ENCODE measurements at regions of chr10 and their contacts with region 1.

Region 1: GRCh38 chr10:4767033-4767814 is 58.8 kb upstream of the AKR1E2 start:
- DNase-seq: no peak

Region 2: DNA sequence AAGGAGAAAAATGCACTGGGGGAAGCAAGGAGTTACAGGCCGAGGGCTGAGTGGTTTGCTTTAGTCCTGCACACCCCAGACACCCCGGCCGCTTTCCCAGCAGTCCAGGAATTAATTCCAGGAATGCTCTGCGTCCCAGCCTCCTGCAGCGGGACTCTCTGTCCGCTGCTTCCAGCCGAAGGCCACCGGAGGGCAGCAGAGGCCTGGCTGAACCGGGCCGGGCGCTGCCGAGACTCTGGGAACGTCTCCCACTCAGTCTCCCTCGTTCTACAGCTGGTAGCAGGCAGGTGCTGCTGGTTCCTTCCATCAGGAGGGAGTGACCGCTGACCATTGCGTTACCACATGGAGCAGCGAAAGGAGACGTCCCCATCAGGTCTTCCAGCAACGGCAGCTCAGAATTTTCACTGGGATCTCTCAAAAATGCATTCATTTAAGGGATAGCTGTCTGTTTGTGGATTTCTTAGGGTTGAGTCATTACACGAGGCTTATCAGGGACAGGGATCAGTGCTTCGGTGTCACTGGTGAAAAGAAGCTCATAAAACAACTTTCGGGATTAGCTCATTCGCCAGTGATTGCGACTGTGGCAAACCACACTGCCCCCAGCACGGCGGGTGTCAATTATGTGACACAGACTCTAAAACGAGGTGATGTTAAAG is 1569.7 kb before region 1 on chr10:
- intact Hi-C with region 1: loop called (anchors 2 kb)
- DNase-seq: peak; percentile 88

Region 3: DNA sequence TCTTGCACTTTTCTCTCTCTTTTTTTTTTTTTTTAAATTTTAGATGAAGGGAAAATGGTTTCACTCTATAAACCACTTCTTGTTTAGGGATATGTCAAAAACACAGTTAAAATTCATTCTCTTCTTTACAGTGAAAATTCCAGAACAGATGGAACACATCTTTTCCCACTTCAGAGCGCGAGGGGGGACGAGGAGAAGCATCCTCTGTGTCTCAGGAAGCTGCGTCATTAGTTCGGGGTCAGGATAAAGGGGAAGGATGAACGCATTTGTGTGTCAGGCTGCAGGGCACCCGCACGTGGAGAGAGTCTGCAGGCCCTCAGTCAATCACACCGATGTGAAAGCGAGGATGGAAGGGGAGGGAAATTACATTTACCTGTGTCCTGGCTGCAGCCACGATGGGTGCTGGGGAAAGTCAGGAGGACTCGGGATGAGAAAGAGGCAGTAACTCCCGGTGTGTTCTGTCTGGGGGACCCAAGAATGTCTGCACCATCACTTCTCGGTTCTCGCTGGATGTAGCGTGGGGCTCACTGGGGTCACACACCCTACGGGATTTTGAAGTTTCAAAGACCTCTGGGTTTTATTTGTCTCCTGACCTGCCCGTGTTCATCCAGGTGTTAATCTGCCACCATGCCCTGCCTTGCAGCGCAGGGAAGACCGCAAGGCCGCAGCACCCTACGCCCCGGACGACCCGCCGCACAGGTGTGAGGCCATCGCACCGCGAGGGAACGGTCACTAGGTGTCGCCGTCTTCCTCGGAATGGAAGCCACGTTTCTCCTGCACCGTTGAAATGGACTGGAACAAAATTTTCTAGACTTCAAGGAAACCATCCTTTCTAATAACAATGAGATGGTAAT is 1527.9 kb before region 1 on chr10:
- intact Hi-C with region 1: loop called (anchors 5 kb)
- DNase-seq: peak; percentile 91

Region 4: GRCh38 chr10:4241724-4242345 is 525.4 kb before region 1 on chr10:
- intact Hi-C with region 1: loop called (anchors 5 kb)
- DNase-seq: no peak

Region 5: GRCh38 chr10:4344511-4344994 is 422.7 kb before region 1 on chr10:
- intact Hi-C with region 1: loop called (anchors 10 kb)
- DNase-seq: peak; percentile 80

Region 6: DNA sequence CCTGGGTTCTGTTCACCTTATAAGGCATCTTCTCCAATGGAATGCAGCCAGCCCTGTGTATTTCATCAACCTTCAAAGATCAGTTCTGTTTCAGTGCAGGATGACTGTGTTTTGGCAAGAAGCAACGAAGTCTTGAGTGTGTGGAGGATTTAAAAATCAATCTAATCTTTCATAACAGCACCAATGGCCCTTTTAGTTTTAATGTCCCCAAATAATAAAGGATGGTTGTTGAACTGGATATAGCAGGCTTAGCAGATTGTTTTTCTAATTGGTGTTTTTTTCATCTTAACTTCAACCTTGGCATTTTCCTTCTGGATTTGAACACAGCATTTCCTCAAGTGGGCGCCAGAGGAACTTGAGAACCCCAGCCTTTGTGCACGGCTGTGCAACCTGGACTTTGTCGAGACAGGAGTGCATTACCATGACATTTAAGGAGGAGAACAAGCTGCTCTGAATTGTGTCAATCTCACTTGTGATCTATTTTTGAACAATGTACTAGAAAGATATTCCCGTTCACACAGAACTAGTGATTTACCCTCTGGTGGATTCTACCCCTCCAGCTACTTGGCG is 254.5 kb before region 1 on chr10:
- intact Hi-C with region 1: loop called (anchors 2 kb)
- DNase-seq: peak; percentile 78